ENCODE measurements at regions of chr3 and their contacts with region 1.

Region 1: GRCh38 chr3:189961525-189962161 is 159.1 kb downstream of the P3H2 start:
- DNase-seq: no peak
- H3K4me3 ChIP-seq: no peak overlapping the region
- CTCF ChIP-seq: peak; percentile 82

Region 2: GRCh38 chr3:189947948-189948723 is 13.5 kb before region 1 on chr3:
- CTCF ChIA-PET with region 1: interaction called, 37 read pairs
- POLR2A ChIA-PET with region 1: no interaction called
- DNase-seq: no peak
- H3K4me3 ChIP-seq: no peak overlapping the region
- CTCF ChIP-seq: peak; percentile 27

Region 3: GRCh38 chr3:190012314-190012782 is 50.7 kb after region 1 on chr3:
- CTCF ChIA-PET with region 1: interaction called, 17 read pairs
- POLR2A ChIA-PET with region 1: no interaction called
- DNase-seq: no peak
- H3K4me3 ChIP-seq: no peak overlapping the region
- CTCF ChIP-seq: no peak

Region 4: GRCh38 chr3:190205739-190206138 is 244.1 kb after region 1 on chr3:
- CTCF ChIA-PET with region 1: interaction called, 164 read pairs
- POLR2A ChIA-PET with region 1: no interaction called
- DNase-seq: no peak
- H3K4me3 ChIP-seq: no peak overlapping the region
- CTCF ChIP-seq: no peak

Region 5: DNA sequence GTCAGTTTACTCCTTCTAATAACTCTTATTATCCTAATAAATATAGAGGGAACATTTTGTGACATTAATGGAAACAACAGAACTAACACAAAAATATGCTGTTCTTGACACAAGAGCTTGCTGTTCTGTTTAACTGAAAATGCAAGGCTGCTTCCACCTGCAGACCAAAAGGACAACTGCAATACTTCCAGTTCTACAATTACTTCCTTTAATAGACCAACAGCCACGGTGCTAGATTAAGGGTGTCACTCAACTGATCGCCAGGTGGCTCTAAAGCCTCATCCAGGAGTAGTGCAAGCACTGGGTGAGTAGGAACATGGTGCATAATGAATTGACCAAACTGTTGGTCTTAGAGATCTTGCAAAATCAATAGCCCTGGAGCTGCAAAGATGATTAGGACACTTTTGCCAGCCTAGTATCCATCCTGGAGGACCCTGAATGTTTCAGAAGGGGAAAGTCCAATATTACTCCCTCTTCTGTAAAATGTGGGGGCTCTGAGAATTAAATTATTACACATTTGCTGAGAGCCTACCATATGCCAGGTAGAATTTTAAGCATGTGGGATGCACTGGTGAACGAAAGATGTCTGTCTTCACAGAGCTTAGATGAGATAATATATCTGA is 422.7 kb after region 1 on chr3:
- CTCF ChIA-PET with region 1: interaction called, 14 read pairs
- POLR2A ChIA-PET with region 1: no interaction called
- DNase-seq: no peak
- H3K4me3 ChIP-seq: no peak overlapping the region
- CTCF ChIP-seq: peak; percentile 43

Region 6: GRCh38 chr3:190701096-190701532 is 739.5 kb after region 1 on chr3:
- CTCF ChIA-PET with region 1: interaction called, 87 read pairs
- POLR2A ChIA-PET with region 1: no interaction called
- DNase-seq: no peak
- H3K4me3 ChIP-seq: no peak overlapping the region
- CTCF ChIP-seq: peak; percentile 58